B cell (primary cell): ENCODE measurements at regions of chr5 and their contacts with region 1.

Region 1: DNA sequence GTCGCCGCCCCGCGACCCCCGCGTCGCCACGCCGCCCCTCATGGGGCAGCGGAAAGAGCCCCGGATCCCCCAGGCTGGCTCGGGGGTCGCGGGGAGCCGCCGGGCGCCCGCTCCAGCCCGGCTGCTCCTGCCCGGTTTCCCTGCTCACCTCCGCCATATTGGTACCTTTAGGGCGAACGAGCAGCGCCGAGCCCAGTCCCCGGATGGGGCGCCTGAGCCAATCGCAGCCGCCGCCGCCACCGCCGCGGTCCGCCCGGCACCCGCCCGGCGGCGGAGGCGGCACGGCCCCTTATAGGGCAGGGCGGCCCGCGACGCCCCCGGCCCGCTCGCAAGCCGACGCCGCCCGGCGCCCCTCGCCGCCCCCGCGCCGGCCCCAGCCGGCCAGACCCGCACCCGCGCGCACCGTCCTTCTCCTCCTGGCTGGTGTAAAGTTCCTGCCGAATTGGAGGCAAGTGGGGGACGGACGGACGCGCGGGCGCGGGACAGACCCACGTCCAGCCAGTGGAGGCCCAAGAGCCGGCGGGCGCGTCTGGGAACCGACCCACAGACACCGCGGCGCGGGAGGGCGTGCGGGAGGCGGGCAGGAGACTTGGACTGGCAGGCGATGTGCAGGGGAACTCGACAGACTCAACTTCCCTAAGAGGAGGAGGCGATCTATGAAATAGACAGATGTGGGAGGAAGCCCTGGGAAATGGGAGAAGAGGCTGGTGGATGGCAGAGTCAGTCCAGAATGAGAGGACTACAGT is at the start of gene MIER3:
- DNase-seq: peak; percentile 84
- ATAC-seq: peak; percentile 91
- H3K4me3 ChIP-seq: peak within 1 kb of the TSS; percentile 38 to 77 (median 72)
- H3K4me3 Mint-ChIP-seq: peak within 1 kb of the TSS; percentile 97
- H3K27ac ChIP-seq: peak within 1 kb of the TSS in 1 of 2 donors; percentile 59
- H3K27ac Mint-ChIP-seq: peak within 1 kb of the TSS; percentile 88
- H3K4me1 ChIP-seq: peaks cover 17 to 19% of the 10 kb centered on the region in 2 donors
- H3K4me1 Mint-ChIP-seq: peaks cover 25% of the 10 kb centered on the region
- H3K27me3 ChIP-seq: peaks cover 0 to 5% (median 1%) of the 10 kb centered on the region in 4 experiments
- H3K27me3 Mint-ChIP-seq: peaks cover 11% of the 10 kb centered on the region
- CTCF ChIP-seq: no peak
- total RNA-seq, gene MIER3: 23.2 and 25.9 TPM in 2 replicates

Region 2: GRCh38 chr5:56909294-56910209 is 42.6 kb before region 1 on chr5 and contains the start of gene SETD9:
- CTCF ChIA-PET with region 1: interaction called, 5 read pairs
- POLR2A ChIA-PET with region 1: interaction called, 3 read pairs
- intact Hi-C with region 1: loop called (anchors 1 kb)
- DNase-seq: peak; percentile 94
- ATAC-seq: peak; percentile 83
- H3K4me3 ChIP-seq: peak within 1 kb of the TSS; percentile 88 to 99 (median 97)
- H3K4me3 Mint-ChIP-seq: peak within 1 kb of the TSS; percentile 93
- H3K27ac ChIP-seq: peak within 1 kb of the TSS; percentile 78 to 93
- H3K27ac Mint-ChIP-seq: peak within 1 kb of the TSS; percentile 91
- H3K4me1 ChIP-seq: peaks cover 12 to 22% of the 10 kb centered on the region in 2 donors
- H3K4me1 Mint-ChIP-seq: peaks cover 21% of the 10 kb centered on the region
- H3K27me3 ChIP-seq: no peaks in the 10 kb centered on the region
- H3K27me3 Mint-ChIP-seq: no peaks in the 10 kb centered on the region
- CTCF ChIP-seq: no peak
- total RNA-seq, gene SETD9: 7.2 and 9.5 TPM in 2 replicates

Region 3: GRCh38 chr5:57032151-57032551 is 80.0 kb after region 1 on chr5:
- CTCF ChIA-PET with region 1: no interaction called
- POLR2A ChIA-PET with region 1: no interaction called
- intact Hi-C with region 1: loop called (anchors 5 kb)
- DNase-seq: no peak
- ATAC-seq: no peak
- H3K4me3 ChIP-seq: no peak overlapping the region
- H3K4me3 Mint-ChIP-seq: no peak overlapping the region
- H3K27ac ChIP-seq: no peak overlapping the region
- H3K27ac Mint-ChIP-seq: no peak overlapping the region
- H3K4me1 ChIP-seq: peaks cover 22 to 24% of the 10 kb centered on the region in 2 donors
- H3K4me1 Mint-ChIP-seq: peaks cover 23% of the 10 kb centered on the region
- H3K27me3 ChIP-seq: no peaks in the 10 kb centered on the region
- H3K27me3 Mint-ChIP-seq: peaks cover 4% of the 10 kb centered on the region
- CTCF ChIP-seq: no peak

Region 4: GRCh38 chr5:57221049-57221568 is 269.0 kb after region 1 on chr5:
- CTCF ChIA-PET with region 1: interaction called, 4 read pairs
- POLR2A ChIA-PET with region 1: no interaction called
- intact Hi-C with region 1: loop called (anchors 2 kb)
- DNase-seq: peak; percentile 82
- ATAC-seq: peak; percentile 65
- H3K4me3 ChIP-seq: no peak overlapping the region
- H3K4me3 Mint-ChIP-seq: peak overlapping the region; percentile 17
- H3K27ac ChIP-seq: peak overlapping the region in 1 of 2 donors; percentile 75
- H3K27ac Mint-ChIP-seq: peak overlapping the region; percentile 21
- H3K4me1 ChIP-seq: peaks cover 3 to 4% of the 10 kb centered on the region in 2 donors
- H3K4me1 Mint-ChIP-seq: peaks cover 33% of the 10 kb centered on the region
- H3K27me3 ChIP-seq: no peaks in the 10 kb centered on the region
- H3K27me3 Mint-ChIP-seq: no peaks in the 10 kb centered on the region
- CTCF ChIP-seq: peak; percentile 96